Right cardiac atrium (tissue), 5 donors: ENCODE measurements at regions of chr16 and their contacts with region 1.

Region 1: DNA sequence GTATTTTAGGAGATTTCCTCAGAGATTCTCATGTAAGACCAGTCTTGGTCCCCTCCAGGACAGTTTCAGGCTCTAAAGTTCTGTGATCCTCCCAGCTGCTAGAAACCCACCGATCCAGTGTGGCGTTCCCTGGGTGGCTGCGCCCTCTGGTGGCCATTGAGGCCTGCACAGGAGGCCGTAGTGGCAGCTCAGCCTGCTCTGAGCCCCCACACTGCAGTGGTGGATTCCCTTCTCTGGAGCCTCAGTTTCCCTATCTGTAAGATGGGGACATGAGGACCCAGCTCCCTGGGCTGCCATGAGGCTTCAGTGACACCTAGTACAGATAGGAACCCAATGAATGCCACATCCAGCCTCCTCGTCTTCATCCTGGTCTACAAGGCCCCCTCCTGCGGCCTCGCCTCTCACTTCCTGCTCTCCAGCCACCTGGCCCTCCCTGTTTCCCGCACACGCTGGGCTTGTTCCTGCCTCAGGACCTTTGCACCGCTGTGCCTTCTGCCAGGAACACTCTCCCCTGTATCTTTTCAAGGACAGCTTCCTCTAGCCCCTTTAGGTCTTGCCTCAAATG is 16.5 kb downstream of the CCDC102A start:
- DNase-seq: peak; percentile 82 to 93 (median 92)
- ATAC-seq: peak; percentile 81 to 82
- H3K4me3 ChIP-seq: no peak overlapping the region
- H3K27ac ChIP-seq: no peak overlapping the region
- H3K4me1 ChIP-seq: no peaks in the 10 kb centered on the region
- H3K27me3 ChIP-seq: no peaks in the 10 kb centered on the region

Region 2: GRCh38 chr16:57300387-57301125 is 219.3 kb before region 1 on chr16:
- intact Hi-C with region 1: loop called in 3 of 4 experiments (anchors 5 to 10 kb)
- DNase-seq: peak; percentile 98 to 100 (median 99)
- ATAC-seq: peak; percentile 92 to 96
- H3K4me3 ChIP-seq: peak overlapping the region; percentile 43
- H3K27ac ChIP-seq: no peak overlapping the region
- H3K4me1 ChIP-seq: peaks cover 4% of the 10 kb centered on the region
- H3K27me3 ChIP-seq: no peaks in the 10 kb centered on the region

Region 3: GRCh38 chr16:57422026-57422944 is 97.6 kb before region 1 on chr16:
- intact Hi-C with region 1: loop called in 1 of 4 experiments (anchors 10 kb)
- DNase-seq: peak; percentile 64 to 74 (median 72)
- ATAC-seq: peak; percentile 60 to 76
- H3K4me3 ChIP-seq: no peak overlapping the region
- H3K27ac ChIP-seq: no peak overlapping the region
- H3K4me1 ChIP-seq: peaks cover 4% of the 10 kb centered on the region
- H3K27me3 ChIP-seq: no peaks in the 10 kb centered on the region

Region 4: GRCh38 chr16:57435838-57436237 is 84.0 kb before region 1 on chr16:
- intact Hi-C with region 1: no loop called
- DNase-seq: no peak
- ATAC-seq: no peak
- H3K4me3 ChIP-seq: no peak overlapping the region
- H3K27ac ChIP-seq: no peak overlapping the region
- H3K4me1 ChIP-seq: no peaks in the 10 kb centered on the region
- H3K27me3 ChIP-seq: no peaks in the 10 kb centered on the region

Region 5: DNA sequence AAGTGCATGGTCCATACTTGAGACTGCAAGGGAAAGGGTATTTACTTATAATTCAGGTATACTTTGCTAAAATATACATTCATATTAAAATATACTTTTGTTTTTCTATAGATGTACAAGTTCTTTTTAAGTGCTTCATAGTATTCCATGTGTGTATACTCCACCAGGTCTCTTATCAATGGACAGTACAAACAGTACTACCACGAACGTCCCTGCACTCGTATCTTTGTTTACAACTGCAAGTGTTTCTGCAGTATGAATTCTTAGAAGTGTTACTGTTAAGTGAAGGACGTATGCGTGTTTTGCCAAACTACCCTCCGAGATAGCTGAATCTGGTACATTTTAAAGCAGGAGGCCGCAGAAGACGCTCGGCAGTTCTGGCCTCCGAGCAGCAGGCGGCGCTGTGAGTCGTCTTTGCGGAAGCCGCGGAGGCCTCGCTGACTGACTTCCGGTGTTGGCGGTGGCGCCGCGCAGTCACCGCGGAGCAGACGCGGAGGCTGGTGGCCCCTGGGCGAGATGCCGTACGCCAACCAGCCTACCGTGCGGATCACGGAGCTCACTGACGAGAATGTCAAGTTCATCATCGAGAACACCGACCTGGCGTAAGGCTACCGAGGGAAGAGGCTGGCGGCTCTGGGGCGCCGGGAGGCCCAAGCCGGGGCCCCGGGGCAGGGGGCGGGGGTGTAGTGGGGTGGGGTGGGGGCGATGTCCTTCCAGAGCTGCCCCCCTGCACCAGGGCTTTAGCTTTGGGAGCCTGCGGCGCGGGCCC is 57.5 kb before region 1 on chr16 and contains the start of gene POLR2C:
- intact Hi-C with region 1: loop called in 1 of 4 experiments (anchors 10 kb)
- DNase-seq: peak; percentile 90 to 96 (median 96)
- ATAC-seq: peak; percentile 90 to 91
- H3K4me3 ChIP-seq: peak within 1 kb of the TSS; percentile 100
- H3K27ac ChIP-seq: peak within 1 kb of the TSS; percentile 56
- H3K4me1 ChIP-seq: peaks cover 3% of the 10 kb centered on the region
- H3K27me3 ChIP-seq: no peaks in the 10 kb centered on the region
- total RNA-seq, gene POLR2C: 36.9 to 47.7 (median 42.0) TPM

Region 6: GRCh38 chr16:57479976-57480753 is 39.7 kb before region 1 on chr16:
- intact Hi-C with region 1: loop called in 1 of 4 experiments (anchors 5 kb)
- DNase-seq: peak; percentile 81 to 92 (median 91)
- ATAC-seq: peak; percentile 69 to 84
- H3K4me3 ChIP-seq: peak overlapping the region; percentile 36
- H3K27ac ChIP-seq: no peak overlapping the region
- H3K4me1 ChIP-seq: peaks cover 22% of the 10 kb centered on the region
- H3K27me3 ChIP-seq: no peaks in the 10 kb centered on the region

Region 7: DNA sequence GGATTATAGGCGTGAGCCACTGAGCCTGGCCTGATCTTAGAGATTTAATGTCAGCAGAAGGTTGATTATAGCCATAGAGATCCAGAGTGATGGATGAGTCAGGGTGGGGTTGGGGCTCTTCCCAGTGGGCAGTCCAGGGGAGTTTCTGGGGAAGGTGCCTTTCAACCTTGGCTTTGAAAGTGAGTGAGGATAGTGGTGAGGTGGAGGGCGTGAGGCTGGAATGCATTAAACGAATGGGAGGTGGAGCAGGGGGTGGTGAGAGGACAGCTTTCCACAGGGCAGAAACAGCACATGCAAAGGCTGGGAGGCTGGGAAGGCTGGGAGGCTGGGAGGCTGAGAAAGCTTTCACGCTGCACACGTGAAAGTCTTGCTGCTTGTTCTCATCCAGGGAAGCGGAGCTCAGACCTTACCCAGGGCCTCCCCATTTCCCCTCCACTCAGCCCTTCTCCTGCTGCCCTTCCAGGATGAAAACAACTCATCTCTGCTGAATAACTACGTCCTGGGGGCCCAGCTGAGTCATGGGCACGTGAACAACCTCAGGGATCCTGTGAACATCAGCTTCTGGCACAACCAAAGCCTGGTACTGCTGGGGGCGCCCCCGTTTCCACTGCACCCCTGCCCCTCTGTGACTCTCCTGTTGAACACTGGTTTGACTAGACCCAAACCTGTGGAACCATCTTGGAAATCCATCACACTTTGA is 44.8 kb after region 1 on chr16:
- intact Hi-C with region 1: no loop called
- DNase-seq: no peak
- ATAC-seq: no peak
- H3K4me3 ChIP-seq: no peak overlapping the region
- H3K27ac ChIP-seq: no peak overlapping the region
- H3K4me1 ChIP-seq: no peaks in the 10 kb centered on the region
- H3K27me3 ChIP-seq: no peaks in the 10 kb centered on the region

Region 8: DNA sequence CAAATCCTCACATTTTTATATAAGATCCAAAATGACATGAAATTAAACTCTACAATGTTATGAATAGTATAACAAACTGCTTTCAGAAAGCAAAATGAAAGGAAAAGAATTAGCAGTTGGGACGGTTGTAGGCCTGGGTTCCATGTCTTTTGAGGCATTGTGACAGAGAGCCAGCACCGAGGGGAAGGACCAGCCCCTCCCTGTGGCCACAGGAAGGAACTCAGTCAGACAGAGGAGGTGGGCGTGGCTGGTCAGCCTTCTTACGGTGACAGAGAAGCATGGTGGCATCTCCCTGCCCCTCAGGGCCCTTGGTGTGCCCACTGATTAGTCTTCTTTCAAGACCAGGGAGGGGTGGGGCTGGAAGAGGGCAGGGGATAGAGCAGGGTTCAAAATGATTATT is 474.9 kb after region 1 on chr16:
- intact Hi-C with region 1: no loop called
- DNase-seq: peak; percentile 68 to 85 (median 80)
- ATAC-seq: peak; percentile 42 to 50
- H3K4me3 ChIP-seq: no peak overlapping the region
- H3K27ac ChIP-seq: no peak overlapping the region
- H3K4me1 ChIP-seq: no peaks in the 10 kb centered on the region
- H3K27me3 ChIP-seq: no peaks in the 10 kb centered on the region